Activated CD8-positive, alpha-beta T cell treated with anti-CD3 and anti-CD28 coated beads, Interleukin-2, amount 10 ng/mL, durations not matched to agents 7 days and 5 days (primary cell): ENCODE measurements at regions of chr2 and their contacts with region 1.

Region 1: GRCh38 chr2:222939208-222939856 is 78.5 kb downstream of the ACSL3 start:
- DNase-seq: peak; percentile 81
- ATAC-seq: peak; percentile 96
- H3K4me3 Mint-ChIP-seq: no peak overlapping the region
- H3K27ac Mint-ChIP-seq: no peak overlapping the region
- H3K4me1 Mint-ChIP-seq: peaks cover 5% of the 10 kb centered on the region
- H3K27me3 Mint-ChIP-seq: no peaks in the 10 kb centered on the region

Region 2: DNA sequence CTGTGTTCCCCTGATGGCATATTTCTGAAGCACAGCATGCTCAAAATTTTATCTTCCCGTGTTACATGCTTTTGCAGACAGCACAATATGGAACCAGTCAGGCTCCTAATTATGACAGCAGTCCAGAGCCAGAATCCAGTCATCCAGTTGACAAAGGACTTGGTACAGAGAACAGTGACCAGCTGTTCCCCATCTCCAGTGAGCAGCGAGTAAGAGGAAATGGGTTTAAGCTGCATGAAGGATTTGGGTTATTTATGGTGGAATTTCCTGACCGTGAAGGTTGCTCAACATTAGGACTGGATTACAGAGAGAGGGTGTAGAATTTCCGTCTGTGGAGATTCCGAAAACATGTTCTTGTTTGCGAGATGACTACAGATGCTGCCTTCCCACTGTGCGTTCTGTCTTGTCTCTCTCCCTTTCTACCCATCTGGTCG is 490.6 kb before region 1 on chr2:
- CTCF ChIA-PET with region 1: no interaction called
- POLR2A ChIA-PET with region 1: no interaction called
- DNase-seq: no peak
- ATAC-seq: no peak
- H3K4me3 Mint-ChIP-seq: no peak overlapping the region
- H3K27ac Mint-ChIP-seq: no peak overlapping the region
- H3K4me1 Mint-ChIP-seq: no peaks in the 10 kb centered on the region
- H3K27me3 Mint-ChIP-seq: peaks cover 5% of the 10 kb centered on the region

Region 3: DNA sequence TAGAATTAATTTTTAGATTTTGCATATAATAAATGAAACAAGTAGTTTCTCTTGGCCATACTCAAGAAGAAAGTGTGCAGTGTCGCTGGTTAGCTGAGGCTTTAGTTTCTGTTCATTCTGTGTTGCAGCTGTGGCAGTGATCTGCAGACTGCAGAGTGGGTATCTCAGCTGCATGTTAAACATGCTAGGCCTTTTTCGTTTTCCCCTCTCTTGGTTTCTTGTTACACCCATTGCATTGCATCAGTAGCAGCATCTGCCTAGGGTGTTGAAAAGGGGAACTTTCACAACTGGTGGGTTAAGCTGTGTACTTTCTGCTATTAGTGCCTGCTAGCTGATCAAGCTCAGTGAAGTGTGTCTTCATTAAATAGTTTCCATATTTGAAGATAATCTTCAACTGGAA is 27.2 kb before region 1 on chr2:
- CTCF ChIA-PET with region 1: interaction called, 16 read pairs
- POLR2A ChIA-PET with region 1: no interaction called
- DNase-seq: no peak
- ATAC-seq: no peak
- H3K4me3 Mint-ChIP-seq: no peak overlapping the region
- H3K27ac Mint-ChIP-seq: no peak overlapping the region
- H3K4me1 Mint-ChIP-seq: peaks cover 27% of the 10 kb centered on the region
- H3K27me3 Mint-ChIP-seq: no peaks in the 10 kb centered on the region

Region 4: DNA sequence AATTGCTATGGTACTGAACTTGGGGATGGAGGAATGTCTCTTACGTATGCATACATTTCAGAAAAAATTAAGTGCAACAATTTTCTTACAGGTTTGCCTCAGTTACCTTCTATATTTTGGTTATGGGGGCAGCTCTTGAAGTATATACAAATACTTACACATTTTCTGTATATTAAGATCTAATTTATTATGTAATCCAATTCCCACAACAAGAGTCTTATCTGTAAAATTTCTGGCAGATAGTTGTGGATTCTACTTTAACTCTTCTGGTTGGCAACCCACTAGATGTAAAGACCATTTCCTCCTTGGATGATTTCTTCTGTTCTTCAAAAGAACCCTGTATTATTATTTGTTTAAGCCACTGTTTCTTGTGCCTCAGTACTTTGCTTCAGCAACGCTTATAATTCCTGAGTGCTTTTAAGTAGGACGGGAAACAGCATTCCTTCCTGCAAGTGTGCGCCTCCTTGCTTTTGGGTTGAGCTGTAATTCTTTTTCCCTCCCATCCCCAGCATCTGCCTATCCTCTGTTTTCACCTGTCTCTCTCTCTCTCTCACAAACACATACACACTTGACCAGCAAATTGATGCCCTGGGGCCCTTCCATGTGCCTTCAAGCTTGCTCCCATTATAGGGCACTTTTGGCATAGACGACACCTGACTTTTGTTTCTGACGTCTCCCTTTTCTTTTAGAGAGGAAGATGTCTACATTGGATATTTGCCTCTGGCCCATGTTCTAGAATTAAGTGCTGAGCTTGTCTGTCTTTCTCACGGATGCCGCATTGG is 17.1 kb before region 1 on chr2:
- CTCF ChIA-PET with region 1: interaction called, 15 read pairs
- POLR2A ChIA-PET with region 1: no interaction called
- DNase-seq: no peak
- ATAC-seq: no peak
- H3K4me3 Mint-ChIP-seq: no peak overlapping the region
- H3K27ac Mint-ChIP-seq: no peak overlapping the region
- H3K4me1 Mint-ChIP-seq: peaks cover 4% of the 10 kb centered on the region
- H3K27me3 Mint-ChIP-seq: no peaks in the 10 kb centered on the region

Region 5: DNA sequence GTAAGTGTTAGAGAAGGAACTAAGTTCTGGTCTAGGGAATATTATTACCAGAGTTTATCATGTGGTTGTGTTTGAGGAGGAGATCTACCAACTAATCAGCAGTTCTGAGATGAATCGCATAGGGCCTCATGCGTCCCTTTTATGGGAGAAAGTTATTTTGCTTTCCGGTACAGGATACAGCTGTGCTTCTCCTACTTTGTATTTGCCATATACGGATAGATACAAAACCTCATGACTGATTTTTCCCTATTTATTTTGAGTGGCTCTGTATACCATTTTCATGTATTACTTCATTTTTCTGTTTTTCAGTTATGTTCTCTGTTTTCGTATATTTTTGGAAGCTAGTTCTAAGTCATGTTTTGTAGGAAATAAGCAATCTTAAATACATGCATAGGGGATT is 11.7 kb before region 1 on chr2:
- CTCF ChIA-PET with region 1: interaction called, 15 read pairs
- POLR2A ChIA-PET with region 1: no interaction called
- DNase-seq: no peak
- ATAC-seq: no peak
- H3K4me3 Mint-ChIP-seq: no peak overlapping the region
- H3K27ac Mint-ChIP-seq: no peak overlapping the region
- H3K4me1 Mint-ChIP-seq: no peaks in the 10 kb centered on the region
- H3K27me3 Mint-ChIP-seq: no peaks in the 10 kb centered on the region

Region 6: DNA sequence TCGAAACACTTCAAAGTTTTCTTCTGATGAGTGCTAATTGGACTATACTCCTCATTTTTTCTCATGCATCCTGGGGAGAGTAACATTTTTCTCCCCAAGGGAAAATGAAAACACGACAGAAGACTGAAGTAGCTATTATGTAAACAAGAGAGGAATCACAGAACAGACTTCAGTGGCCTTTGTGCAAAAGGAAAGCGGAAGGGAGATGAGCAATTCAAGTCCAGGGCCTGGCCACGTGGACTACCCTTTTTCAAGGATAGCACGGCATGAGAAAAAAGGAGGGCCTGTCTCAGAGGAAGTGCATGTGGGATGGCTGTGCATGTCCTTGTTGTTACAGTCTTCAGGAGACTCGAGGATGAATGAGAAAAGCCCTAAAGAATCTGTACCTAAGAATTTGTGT is 68.8 kb after region 1 on chr2:
- CTCF ChIA-PET with region 1: no interaction called
- POLR2A ChIA-PET with region 1: no interaction called
- DNase-seq: no peak
- ATAC-seq: no peak
- H3K4me3 Mint-ChIP-seq: no peak overlapping the region
- H3K27ac Mint-ChIP-seq: no peak overlapping the region
- H3K4me1 Mint-ChIP-seq: no peaks in the 10 kb centered on the region
- H3K27me3 Mint-ChIP-seq: no peaks in the 10 kb centered on the region